ENCODE measurements at regions of chr20 and their contacts with region 1.

Region 1: GRCh38 chr20:37534401-37535157 is 6.9 kb upstream of the BLCAP start:
- DNase-seq: peak; percentile 60
- H3K4me3 Mint-ChIP-seq: no peak overlapping the region
- H3K27ac Mint-ChIP-seq: no peak overlapping the region
- H3K4me1 Mint-ChIP-seq: peaks cover 4% of the 10 kb centered on the region
- H3K27me3 Mint-ChIP-seq: no peaks in the 10 kb centered on the region

Region 2: DNA sequence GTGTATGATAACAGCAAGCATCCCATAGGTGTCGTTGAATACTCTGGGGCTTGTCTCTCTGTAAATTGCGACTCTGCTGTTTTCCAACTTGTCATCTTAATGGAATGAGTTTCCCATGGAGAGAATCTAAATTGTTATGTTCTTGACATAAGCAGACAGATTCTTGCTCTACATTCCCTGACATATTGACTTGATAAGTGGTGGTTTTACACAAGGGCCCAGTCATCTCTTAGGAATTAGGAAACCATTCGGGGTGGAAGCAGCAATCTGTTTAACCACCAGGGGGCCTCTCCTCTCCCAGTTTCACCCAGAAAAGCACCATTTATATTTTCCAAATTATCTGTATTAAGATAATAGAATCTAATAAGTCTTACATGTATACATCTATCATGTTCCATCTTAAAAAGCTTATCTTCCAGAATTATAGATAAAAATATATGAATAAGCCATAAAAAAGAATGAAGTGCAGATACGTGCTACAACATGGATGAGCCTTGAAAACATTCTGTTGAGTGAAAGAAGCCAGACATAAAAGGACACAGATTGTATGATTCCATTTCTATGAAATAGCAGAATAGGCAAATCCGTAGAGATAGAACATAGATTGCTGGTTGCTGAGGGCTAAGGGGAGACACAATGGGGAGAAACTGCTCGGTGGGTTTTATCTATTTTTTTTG is 332.2 kb before region 1 on chr20:
- CTCF ChIA-PET with region 1: interaction called, 6 read pairs
- intact Hi-C with region 1: loop called (anchors 1 kb)
- DNase-seq: peak; percentile 37
- H3K4me3 Mint-ChIP-seq: no peak overlapping the region
- H3K27ac Mint-ChIP-seq: no peak overlapping the region
- H3K4me1 Mint-ChIP-seq: no peaks in the 10 kb centered on the region
- H3K27me3 Mint-ChIP-seq: no peaks in the 10 kb centered on the region

Region 3: GRCh38 chr20:37270576-37271420 is 263.8 kb before region 1 on chr20:
- CTCF ChIA-PET with region 1: interaction called, 22 read pairs
- intact Hi-C with region 1: loop called (anchors 1 kb)
- DNase-seq: no peak
- H3K4me3 Mint-ChIP-seq: no peak overlapping the region
- H3K27ac Mint-ChIP-seq: no peak overlapping the region
- H3K4me1 Mint-ChIP-seq: no peaks in the 10 kb centered on the region
- H3K27me3 Mint-ChIP-seq: no peaks in the 10 kb centered on the region

Region 4: DNA sequence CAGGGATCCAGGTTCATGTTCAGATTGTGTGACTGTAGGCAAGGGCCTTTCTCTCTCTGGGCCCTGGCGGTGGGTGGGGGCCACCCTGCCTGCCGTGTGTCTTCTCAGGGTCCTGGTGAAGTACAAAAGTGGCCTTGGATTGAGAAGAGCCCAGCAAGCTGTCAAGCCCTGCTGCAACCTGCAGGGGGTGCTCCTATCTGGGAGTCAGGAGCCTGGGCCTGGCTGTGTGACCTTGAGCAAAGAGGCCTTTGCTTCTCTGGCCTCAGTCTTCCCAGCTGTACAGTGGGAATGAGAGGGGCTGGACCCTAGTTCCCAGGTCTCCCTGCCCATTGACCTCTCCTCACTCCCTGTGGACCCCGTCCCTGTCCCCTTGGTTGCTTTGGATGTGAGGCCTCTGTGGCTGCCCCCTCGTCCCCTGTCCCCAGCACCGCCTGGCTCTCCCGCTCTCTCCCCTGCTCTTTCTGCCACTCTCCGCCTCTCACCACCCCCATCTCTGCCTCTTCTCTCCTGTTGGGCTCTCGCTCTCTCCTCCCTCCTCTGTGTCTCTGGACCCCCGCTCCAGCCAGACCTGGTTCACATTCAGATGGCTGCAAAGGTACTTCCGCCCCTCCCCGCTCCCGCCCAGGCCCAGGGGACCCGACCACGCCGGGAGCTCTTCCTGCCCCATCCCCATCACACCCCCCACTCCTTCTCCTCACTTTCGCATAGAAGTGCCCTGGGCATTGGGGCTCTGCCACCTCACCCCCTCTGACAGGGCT is 142.0 kb before region 1 on chr20:
- CTCF ChIA-PET with region 1: interaction called, 3 read pairs
- intact Hi-C with region 1: loop called (anchors 1 kb)
- DNase-seq: peak; percentile 40
- H3K4me3 Mint-ChIP-seq: no peak overlapping the region
- H3K27ac Mint-ChIP-seq: no peak overlapping the region
- H3K4me1 Mint-ChIP-seq: no peaks in the 10 kb centered on the region
- H3K27me3 Mint-ChIP-seq: no peaks in the 10 kb centered on the region